CD8-positive, alpha-beta memory T cell (primary cell): ENCODE measurements at regions of chr6 and their contacts with region 1.

Region 1: DNA sequence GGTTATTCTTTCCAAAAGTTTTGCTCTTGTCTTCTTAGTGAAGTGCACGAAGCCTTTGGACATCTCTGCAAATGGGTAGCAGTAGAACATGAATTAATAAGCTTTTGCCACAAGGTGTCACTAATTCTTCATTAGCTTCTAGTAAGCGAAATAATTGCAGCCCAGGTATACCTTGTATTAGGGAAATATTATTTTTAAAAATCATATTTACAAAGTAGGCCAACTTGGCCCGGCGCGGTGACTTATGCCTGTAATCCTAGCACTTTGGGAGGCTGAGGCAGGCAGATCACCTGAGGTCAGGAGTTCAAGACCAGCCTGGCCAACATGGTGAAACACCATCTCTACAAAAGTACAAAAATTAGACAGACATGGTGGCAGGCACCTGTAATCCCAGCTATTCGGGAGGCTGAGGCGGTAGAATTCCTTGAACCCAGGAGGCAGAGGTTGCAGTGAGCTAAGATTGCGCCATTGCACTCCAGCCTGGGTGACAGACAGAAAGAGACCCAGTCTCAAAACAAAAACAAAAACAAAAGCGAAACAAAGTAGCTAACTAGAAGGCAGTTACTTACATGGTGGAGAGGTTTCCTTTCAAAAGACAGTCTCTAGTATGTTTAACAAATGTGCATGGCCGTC is 8.8 kb upstream of the RSPH3 start:
- DNase-seq: peak in 3 of 5 donors; percentile 48 to 53 (median 48)
- H3K4me3 ChIP-seq: peak overlapping the region; percentile 44
- H3K4me3 Mint-ChIP-seq: peak overlapping the region; percentile 47 to 92 (median 81)
- H3K27ac ChIP-seq: no peak overlapping the region
- H3K27ac Mint-ChIP-seq: peak overlapping the region; percentile 49 to 92 (median 84)
- H3K4me1 ChIP-seq: peaks cover 20% of the 10 kb centered on the region
- H3K4me1 Mint-ChIP-seq: peaks cover 35 to 50% (median 50%) of the 10 kb centered on the region in 3 donors
- H3K27me3 ChIP-seq: no peaks in the 10 kb centered on the region
- H3K27me3 Mint-ChIP-seq: no peaks in the 10 kb centered on the region

Region 2: GRCh38 chr6:158905277-158905676 is 103.5 kb before region 1 on chr6:
- CTCF ChIA-PET with region 1: no interaction called
- POLR2A ChIA-PET with region 1: no interaction called
- DNase-seq: no peak
- H3K4me3 ChIP-seq: no peak overlapping the region
- H3K4me3 Mint-ChIP-seq: no peak overlapping the region
- H3K27ac ChIP-seq: no peak overlapping the region
- H3K27ac Mint-ChIP-seq: peak overlapping the region in 1 of 8 donors; percentile 30
- H3K4me1 ChIP-seq: peaks cover 7% of the 10 kb centered on the region
- H3K4me1 Mint-ChIP-seq: peaks cover 6 to 7% (median 7%) of the 10 kb centered on the region in 3 donors
- H3K27me3 ChIP-seq: no peaks in the 10 kb centered on the region
- H3K27me3 Mint-ChIP-seq: peaks cover 0 to 2% of the 10 kb centered on the region in 2 donors

Region 3: GRCh38 chr6:159098636-159099106 is 89.9 kb after region 1 on chr6:
- CTCF ChIA-PET with region 1: interaction called, 248 read pairs
- POLR2A ChIA-PET with region 1: interaction called, 5 read pairs
- DNase-seq: peak; percentile 58 to 85 (median 82)
- H3K4me3 ChIP-seq: peak overlapping the region; percentile 24
- H3K4me3 Mint-ChIP-seq: peak overlapping the region; percentile 21 to 88 (median 76)
- H3K27ac ChIP-seq: peak overlapping the region; percentile 40
- H3K27ac Mint-ChIP-seq: peak overlapping the region; percentile 82 to 99 (median 97)
- H3K4me1 ChIP-seq: peaks cover 55% of the 10 kb centered on the region
- H3K4me1 Mint-ChIP-seq: peaks cover 52 to 87% (median 74%) of the 10 kb centered on the region in 3 donors
- H3K27me3 ChIP-seq: no peaks in the 10 kb centered on the region
- H3K27me3 Mint-ChIP-seq: no peaks in the 10 kb centered on the region

Region 4: GRCh38 chr6:159163901-159164370 is 155.2 kb after region 1 on chr6:
- CTCF ChIA-PET with region 1: no interaction called
- POLR2A ChIA-PET with region 1: no interaction called
- DNase-seq: no peak
- H3K4me3 ChIP-seq: no peak overlapping the region
- H3K4me3 Mint-ChIP-seq: no peak overlapping the region
- H3K27ac ChIP-seq: no peak overlapping the region
- H3K27ac Mint-ChIP-seq: no peak overlapping the region
- H3K4me1 ChIP-seq: no peaks in the 10 kb centered on the region
- H3K4me1 Mint-ChIP-seq: peaks cover 6 to 14% (median 9%) of the 10 kb centered on the region in 3 donors
- H3K27me3 ChIP-seq: no peaks in the 10 kb centered on the region
- H3K27me3 Mint-ChIP-seq: peaks cover 46 to 83% of the 10 kb centered on the region in 2 donors